Calu3 (cell line): ENCODE measurements at regions of chr3 and their contacts with region 1.

Region 1: GRCh38 chr3:16600780-16601539 is 4.3 kb downstream of the DAZL start:
- DNase-seq: peak; percentile 71
- H3K4me3 Mint-ChIP-seq: no peak overlapping the region
- H3K27ac Mint-ChIP-seq: no peak overlapping the region
- H3K4me1 Mint-ChIP-seq: peaks cover 7% of the 10 kb centered on the region
- H3K27me3 Mint-ChIP-seq: no peaks in the 10 kb centered on the region
- CTCF ChIP-seq: peak; percentile 39

Region 2: DNA sequence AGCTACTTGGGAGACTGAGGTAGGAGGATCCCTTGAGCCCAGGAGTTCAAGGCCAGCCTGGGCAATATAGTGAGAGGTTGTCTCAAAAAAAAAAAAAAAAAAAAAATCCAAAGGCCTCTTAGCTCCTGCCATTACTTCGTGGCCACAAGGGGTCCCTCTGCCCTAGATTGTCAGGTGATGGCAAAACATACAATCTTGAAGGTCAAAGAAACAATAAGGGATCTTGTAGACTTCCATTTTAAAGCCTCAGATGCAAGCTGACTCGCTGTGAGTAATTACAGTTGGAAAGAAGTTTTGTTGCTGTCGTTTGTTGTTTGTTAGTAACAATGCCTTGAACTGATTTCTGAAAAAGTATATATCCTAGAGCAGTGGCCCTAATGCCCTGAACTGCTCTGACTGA is 227.9 kb after region 1 on chr3:
- CTCF ChIA-PET with region 1: no interaction called
- intact Hi-C with region 1: loop called (anchors 2 kb)
- DNase-seq: peak; percentile 47
- H3K4me3 Mint-ChIP-seq: no peak overlapping the region
- H3K27ac Mint-ChIP-seq: no peak overlapping the region
- H3K4me1 Mint-ChIP-seq: no peaks in the 10 kb centered on the region
- H3K27me3 Mint-ChIP-seq: no peaks in the 10 kb centered on the region
- CTCF ChIP-seq: no peak

Region 3: DNA sequence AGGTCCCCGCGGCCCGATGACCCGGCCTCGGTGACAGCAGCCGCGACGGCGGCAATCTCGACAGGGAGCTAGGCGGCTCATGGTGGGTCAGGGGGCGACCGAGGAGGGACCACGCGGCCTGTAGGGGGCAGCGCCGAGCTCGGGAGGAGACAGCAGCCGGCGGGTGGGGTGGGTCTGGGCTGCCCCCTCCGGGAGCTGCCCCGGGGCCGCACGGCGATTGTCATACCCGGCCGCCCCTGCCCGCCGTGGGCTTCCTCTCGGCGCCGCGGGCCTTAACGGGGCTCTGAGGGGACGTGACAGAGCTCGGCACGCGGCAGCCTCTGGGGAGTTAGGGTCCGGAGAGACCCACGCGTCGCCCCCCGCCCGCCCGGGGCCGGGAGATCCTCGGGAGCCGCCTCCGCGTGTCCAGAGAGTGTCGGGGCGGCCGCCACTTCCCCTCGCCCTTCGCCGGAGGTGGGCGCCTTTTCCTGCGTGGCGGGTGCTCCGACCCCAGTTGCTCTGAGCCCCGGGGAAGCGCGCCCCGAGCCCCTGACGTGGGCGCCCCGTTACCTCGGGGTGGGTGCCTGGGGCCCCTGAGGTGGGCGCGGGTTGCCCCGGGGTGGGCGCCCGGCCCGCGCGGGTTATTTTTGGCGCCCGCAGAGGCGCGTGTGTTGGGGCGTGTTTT is 283.3 kb after region 1 on chr3:
- CTCF ChIA-PET with region 1: no interaction called
- intact Hi-C with region 1: loop called (anchors 10 kb)
- DNase-seq: peak; percentile 83
- H3K4me3 Mint-ChIP-seq: peak overlapping the region; percentile 79
- H3K27ac Mint-ChIP-seq: peak overlapping the region; percentile 31
- H3K4me1 Mint-ChIP-seq: peaks cover 15% of the 10 kb centered on the region
- H3K27me3 Mint-ChIP-seq: no peaks in the 10 kb centered on the region
- CTCF ChIP-seq: no peak

Region 4: DNA sequence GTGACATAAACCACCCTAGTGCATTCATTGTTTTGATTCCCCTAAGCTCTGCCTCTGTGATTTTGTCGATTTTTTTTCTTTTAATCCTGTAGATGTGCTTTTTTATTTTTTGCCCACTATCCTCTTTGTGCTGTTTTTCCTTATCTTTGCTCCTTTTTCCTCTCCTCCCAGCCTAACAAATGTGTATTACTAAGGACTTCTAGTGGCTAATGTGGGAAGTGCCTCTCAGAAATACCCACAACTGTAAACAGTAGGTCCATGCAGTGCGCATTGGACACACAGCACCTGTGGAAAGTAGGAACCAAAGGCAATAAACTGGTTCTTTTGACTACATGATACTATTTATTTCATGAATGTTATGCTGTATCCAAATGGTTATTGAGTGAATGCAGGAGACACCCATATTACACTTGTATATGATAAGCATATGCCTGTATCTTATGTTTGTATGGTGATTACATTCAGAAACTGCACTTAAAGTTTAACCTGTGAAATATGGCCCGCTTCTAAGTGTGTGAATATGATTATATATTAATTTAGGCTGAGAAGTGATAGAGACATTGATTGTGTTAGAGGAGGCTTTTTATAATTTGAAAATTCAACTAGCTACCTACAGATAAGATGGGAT is 431.6 kb after region 1 on chr3:
- CTCF ChIA-PET with region 1: no interaction called
- intact Hi-C with region 1: loop called (anchors 1 kb)
- DNase-seq: peak; percentile 19
- H3K4me3 Mint-ChIP-seq: no peak overlapping the region
- H3K27ac Mint-ChIP-seq: peak overlapping the region; percentile 6
- H3K4me1 Mint-ChIP-seq: peaks cover 9% of the 10 kb centered on the region
- H3K27me3 Mint-ChIP-seq: no peaks in the 10 kb centered on the region
- CTCF ChIP-seq: peak; percentile 43

Region 5: DNA sequence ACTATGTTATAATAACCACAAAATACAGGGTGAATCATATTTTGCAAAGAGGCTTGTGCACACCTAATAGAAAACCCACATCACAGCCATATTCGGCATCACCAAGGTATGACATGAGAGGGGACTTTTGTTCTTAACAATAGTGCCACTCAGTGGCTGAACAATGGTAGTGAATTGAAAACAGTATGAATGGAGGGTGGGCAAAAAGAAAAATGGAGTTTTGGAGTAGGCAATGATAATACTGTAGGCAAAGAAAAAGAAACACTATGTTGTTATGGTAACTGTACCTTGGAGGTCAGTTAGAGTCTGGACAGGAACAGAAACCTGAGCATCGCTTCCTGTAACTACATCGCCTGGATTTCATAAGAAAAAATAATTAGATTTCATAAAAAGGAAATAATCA is 632.4 kb after region 1 on chr3:
- CTCF ChIA-PET with region 1: no interaction called
- intact Hi-C with region 1: loop called (anchors 1 kb)
- DNase-seq: peak; percentile 20
- H3K4me3 Mint-ChIP-seq: no peak overlapping the region
- H3K27ac Mint-ChIP-seq: no peak overlapping the region
- H3K4me1 Mint-ChIP-seq: no peaks in the 10 kb centered on the region
- H3K27me3 Mint-ChIP-seq: no peaks in the 10 kb centered on the region
- CTCF ChIP-seq: peak; percentile 40

Region 6: DNA sequence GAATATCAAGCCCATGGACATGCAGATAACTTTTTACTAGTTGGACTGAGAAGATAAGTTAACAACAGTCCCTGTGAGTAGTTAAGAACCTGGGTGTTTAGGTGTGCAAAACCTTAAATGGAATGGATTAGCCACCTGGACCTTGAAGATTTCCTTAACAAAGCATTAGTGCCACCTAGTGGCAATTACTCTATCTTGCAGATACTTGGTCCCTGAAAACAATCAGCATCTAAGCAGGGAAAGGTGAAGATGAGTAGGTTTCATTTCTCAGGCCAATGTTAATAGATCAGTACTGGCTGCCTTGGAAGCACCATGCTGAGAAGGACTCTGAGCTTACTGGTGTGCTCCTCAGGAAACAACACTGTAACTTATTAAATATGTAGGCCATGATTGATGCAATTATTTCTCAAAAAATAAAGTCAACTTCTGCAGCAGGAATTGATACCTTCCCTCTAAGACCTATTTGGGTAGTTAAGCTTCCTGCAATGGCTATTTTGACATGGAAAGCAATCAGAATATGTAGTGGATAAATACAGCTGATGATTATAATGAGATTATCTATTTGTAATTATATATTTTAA is 812.1 kb after region 1 on chr3:
- CTCF ChIA-PET with region 1: no interaction called
- intact Hi-C with region 1: loop called (anchors 5 kb)
- DNase-seq: peak; percentile 21
- H3K4me3 Mint-ChIP-seq: no peak overlapping the region
- H3K27ac Mint-ChIP-seq: no peak overlapping the region
- H3K4me1 Mint-ChIP-seq: no peaks in the 10 kb centered on the region
- H3K27me3 Mint-ChIP-seq: no peaks in the 10 kb centered on the region
- CTCF ChIP-seq: peak; percentile 57